Ascending aorta (tissue), 2 donors: ENCODE measurements at regions of chr2 and their contacts with region 1.

Region 1: DNA sequence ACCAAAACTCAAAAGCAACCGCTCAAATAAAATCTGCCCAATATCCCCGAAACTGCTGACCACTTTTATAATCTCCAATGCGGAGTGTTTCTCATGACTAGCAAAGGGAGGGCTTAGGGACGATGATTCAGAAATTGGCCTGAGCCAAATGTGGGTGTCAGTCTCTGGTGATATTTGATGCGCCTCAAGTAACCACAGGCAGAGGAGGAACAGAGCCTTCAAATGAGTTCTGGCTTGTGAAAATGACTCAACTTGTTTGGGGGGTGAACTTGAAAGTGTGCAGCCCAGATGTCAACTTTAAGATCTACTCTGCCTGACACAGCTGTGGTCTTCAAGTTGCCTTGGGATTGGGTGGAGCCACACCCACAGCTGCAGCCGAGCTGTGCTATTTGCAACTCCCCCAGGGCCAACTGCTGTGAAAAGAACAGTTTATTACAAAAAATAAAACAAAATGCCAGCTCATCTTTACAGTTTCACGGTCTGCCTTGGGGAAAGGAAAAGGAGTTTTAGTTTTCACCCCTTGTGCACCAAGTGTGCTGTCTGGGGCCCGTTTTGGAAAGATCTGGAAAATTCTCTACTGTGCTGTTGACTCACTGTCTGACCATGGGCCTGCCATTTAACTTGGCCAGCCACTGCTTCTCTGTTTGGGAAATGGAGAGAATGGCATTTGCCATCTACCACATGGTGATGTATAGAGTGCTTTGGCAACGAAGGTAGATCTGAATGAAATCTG is 222.1 kb downstream of the MTX2 start:
- DNase-seq: peak in 1 of 2 donors; percentile 63
- H3K4me3 ChIP-seq: no peak overlapping the region
- H3K27ac ChIP-seq: no peak overlapping the region
- H3K4me1 ChIP-seq: no peaks in the 10 kb centered on the region
- H3K27me3 ChIP-seq: no peaks in the 10 kb centered on the region
- CTCF ChIP-seq: no peak

Region 2: DNA sequence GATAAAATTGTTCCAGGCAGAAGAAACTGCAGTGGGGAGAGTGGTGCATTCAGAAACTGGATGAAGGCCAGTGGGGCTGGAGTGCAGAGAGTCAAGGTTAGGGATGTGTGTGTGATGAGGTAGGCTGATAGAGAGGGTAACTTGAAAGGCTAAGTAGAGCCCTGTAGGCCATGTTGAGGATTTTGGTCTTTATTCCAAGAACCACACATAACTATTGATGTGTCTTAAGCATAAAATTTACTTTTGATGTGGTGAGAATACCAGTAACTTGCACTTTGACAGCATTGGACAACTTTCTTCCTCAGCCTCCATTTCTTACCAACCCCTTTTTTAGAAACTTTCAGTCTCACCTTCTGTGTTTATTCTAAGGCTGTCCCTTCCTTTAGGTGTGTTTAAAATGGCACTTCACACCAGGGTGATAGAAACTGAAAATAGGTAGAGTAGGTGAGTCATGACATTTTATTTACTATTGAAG is 199.5 kb before region 1 on chr2:
- intact Hi-C with region 1: no loop called
- DNase-seq: no peak
- H3K4me3 ChIP-seq: no peak overlapping the region
- H3K27ac ChIP-seq: no peak overlapping the region
- H3K4me1 ChIP-seq: no peaks in the 10 kb centered on the region
- H3K27me3 ChIP-seq: no peaks in the 10 kb centered on the region
- CTCF ChIP-seq: no peak

Region 3: GRCh38 chr2:176526995-176527901 is 35.9 kb after region 1 on chr2:
- intact Hi-C with region 1: loop called (anchors 5 kb)
- DNase-seq: no peak
- H3K4me3 ChIP-seq: no peak overlapping the region
- H3K27ac ChIP-seq: no peak overlapping the region
- H3K4me1 ChIP-seq: no peaks in the 10 kb centered on the region
- H3K27me3 ChIP-seq: no peaks in the 10 kb centered on the region
- CTCF ChIP-seq: no peak

Region 4: GRCh38 chr2:177207101-177207500 is 715.8 kb after region 1 on chr2:
- intact Hi-C with region 1: loop called (anchors 5 kb)
- DNase-seq: no peak
- H3K4me3 ChIP-seq: no peak overlapping the region
- H3K27ac ChIP-seq: no peak overlapping the region
- H3K4me1 ChIP-seq: peaks cover 9% of the 10 kb centered on the region in 2 donors
- H3K27me3 ChIP-seq: no peaks in the 10 kb centered on the region
- CTCF ChIP-seq: no peak